PC-3 (cell line): ENCODE measurements at regions of chr7 and their contacts with region 1.

Region 1: GRCh38 chr7:141533149-141533949 is 17.9 kb upstream of the AGK start:
- DNase-seq: peak; percentile 78
- ATAC-seq: peak; percentile 94
- H3K4me3 ChIP-seq: no peak overlapping the region
- H3K27ac ChIP-seq: no peak overlapping the region
- H3K4me1 ChIP-seq: no peaks in the 10 kb centered on the region
- H3K27me3 ChIP-seq: peaks cover 21% of the 10 kb centered on the region
- CTCF ChIP-seq: peak; percentile 96

Region 2: DNA sequence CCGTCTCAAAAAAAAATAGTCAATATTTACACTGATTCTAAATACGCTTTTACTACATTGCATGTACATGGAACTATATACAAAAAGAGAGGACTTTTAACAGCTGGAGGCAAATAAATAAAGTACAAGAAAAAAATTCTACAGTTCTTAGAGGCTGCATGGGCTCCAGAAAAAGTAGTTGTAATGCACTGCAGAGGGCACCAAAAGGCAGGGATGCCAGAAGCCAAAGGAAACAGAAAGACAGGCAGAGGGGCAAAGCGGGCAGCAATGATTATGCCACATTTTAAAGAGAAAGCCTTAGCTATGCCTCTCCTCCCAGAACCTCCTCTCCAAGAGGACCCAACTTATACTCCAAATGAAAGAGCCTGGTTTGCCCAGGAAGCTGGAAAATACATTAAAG is 872.2 kb before region 1 on chr7:
- CTCF ChIA-PET with region 1: no interaction called
- POLR2A ChIA-PET with region 1: no interaction called
- intact Hi-C with region 1: loop called (anchors 5 kb)
- DNase-seq: no peak
- ATAC-seq: peak; percentile 70
- H3K4me3 ChIP-seq: no peak overlapping the region
- H3K27ac ChIP-seq: no peak overlapping the region
- H3K4me1 ChIP-seq: peaks cover 9% of the 10 kb centered on the region
- H3K27me3 ChIP-seq: no peaks in the 10 kb centered on the region
- CTCF ChIP-seq: peak; percentile 43; the same call in 1 of the 2 replicates

Region 3: DNA sequence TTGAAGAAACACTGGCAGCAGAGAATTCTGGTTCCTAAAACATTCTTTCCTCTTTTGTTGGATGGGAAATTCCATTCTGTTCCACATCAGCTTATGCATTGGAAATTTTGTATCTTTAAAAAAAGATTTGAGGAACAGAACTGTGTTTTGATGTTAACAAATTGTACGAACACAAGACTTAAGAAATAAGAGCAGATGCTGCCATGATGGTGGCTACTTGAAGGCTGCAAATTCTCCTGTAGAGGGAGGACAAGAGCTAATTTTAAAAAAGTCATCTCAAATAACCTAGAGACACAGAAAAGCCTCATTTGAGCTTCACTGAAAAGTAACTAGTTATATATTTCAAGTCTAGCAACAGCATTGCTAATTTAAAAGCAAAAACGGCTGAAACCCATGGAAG is 807.1 kb before region 1 on chr7:
- CTCF ChIA-PET with region 1: no interaction called
- POLR2A ChIA-PET with region 1: no interaction called
- intact Hi-C with region 1: loop called (anchors 2 kb)
- DNase-seq: peak; percentile 34
- ATAC-seq: peak; percentile 67
- H3K4me3 ChIP-seq: no peak overlapping the region
- H3K27ac ChIP-seq: no peak overlapping the region
- H3K4me1 ChIP-seq: no peaks in the 10 kb centered on the region
- H3K27me3 ChIP-seq: no peaks in the 10 kb centered on the region
- CTCF ChIP-seq: peak; percentile 67

Region 4: DNA sequence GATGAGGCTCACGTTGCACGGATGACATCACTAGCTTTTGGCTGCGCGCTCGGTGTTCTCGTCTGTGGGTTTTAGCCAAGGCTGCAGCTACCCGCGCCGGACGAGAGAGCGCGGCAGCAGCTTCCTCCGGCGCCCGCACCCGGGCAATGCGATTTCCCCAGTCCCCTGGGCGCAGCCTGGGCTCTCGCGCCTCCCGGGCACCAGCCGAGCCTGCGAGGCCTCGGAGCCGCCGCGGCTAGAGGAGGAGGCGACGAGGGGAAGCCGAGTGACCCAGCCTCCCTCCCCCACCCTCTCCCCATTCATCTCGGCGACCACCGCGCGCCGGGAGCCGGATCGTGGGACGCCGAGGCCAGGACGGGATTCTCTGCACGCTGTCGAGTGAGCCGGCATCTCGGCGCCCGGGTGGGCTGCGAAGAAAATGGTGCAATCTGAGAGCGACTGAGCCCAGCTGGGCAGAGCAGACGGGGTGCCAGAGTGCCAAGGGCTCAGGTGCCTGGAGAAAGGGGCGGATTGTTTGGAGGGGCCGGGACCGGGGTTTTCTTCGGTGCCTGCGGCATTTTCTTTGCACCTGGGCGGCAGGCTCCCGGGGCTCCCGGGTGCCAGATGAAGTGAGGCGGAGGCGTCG is 460.7 kb before region 1 on chr7:
- CTCF ChIA-PET with region 1: no interaction called
- POLR2A ChIA-PET with region 1: no interaction called
- intact Hi-C with region 1: loop called (anchors 10 kb)
- DNase-seq: peak; percentile 63
- ATAC-seq: peak; percentile 61
- H3K4me3 ChIP-seq: peak overlapping the region; percentile 61
- H3K27ac ChIP-seq: no peak overlapping the region
- H3K4me1 ChIP-seq: peaks cover 2% of the 10 kb centered on the region; the same call in 1 of the 2 replicates
- H3K27me3 ChIP-seq: peaks cover 73% of the 10 kb centered on the region
- CTCF ChIP-seq: no peak

Region 5: GRCh38 chr7:141409801-141410329 is 123.5 kb before region 1 on chr7:
- CTCF ChIA-PET with region 1: no interaction called
- POLR2A ChIA-PET with region 1: no interaction called
- intact Hi-C with region 1: no loop called
- DNase-seq: no peak
- ATAC-seq: no peak
- H3K4me3 ChIP-seq: no peak overlapping the region
- H3K27ac ChIP-seq: no peak overlapping the region
- H3K4me1 ChIP-seq: no peaks in the 10 kb centered on the region
- H3K27me3 ChIP-seq: peaks cover 70% of the 10 kb centered on the region
- CTCF ChIP-seq: no peak

Region 6: DNA sequence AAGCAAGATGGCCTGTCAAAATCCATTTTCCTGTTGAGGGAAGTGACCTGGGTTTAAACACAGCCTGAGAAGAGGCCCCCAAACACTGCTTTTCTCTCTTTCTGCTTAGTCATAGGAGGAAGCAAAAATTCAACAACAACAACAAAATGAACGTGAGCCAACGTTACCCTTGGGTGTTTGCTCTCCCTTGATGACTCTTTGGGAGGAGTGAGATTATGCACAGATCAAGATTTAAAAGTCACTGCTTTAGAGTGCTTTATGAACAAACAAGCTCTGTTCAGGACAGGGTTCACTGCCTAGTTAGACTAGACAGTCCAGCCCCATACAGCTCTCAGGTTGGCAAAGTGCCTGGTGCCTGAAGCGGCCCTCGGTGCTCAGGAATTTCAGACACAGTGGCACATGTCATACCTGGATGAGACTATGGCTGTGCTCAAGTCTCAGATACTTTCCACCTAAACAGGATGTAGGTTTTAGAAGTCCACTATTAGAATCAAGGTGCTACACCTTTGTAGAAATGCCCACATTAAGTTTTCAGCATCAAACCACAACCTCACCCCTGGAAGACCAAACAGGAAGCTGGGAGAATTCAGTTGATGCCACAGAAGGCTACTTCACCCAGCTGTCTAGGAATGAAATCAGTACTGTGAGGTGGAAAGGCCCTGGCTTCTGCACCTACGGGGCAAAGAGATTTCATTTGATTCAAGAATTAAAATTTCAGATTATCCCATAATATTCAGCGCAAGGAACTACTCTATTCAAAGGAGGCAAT is 129.9 kb after region 1 on chr7:
- CTCF ChIA-PET with region 1: no interaction called
- POLR2A ChIA-PET with region 1: no interaction called
- intact Hi-C with region 1: no loop called
- DNase-seq: peak; percentile 78
- ATAC-seq: peak; percentile 88
- H3K4me3 ChIP-seq: no peak overlapping the region
- H3K27ac ChIP-seq: peak overlapping the region; percentile 84
- H3K4me1 ChIP-seq: peaks cover 19% of the 10 kb centered on the region
- H3K27me3 ChIP-seq: no peaks in the 10 kb centered on the region
- CTCF ChIP-seq: no peak